Head of caudate nucleus (tissue), 42 donors: ENCODE measurements at regions of chr6 and their contacts with region 1.

Region 1: DNA sequence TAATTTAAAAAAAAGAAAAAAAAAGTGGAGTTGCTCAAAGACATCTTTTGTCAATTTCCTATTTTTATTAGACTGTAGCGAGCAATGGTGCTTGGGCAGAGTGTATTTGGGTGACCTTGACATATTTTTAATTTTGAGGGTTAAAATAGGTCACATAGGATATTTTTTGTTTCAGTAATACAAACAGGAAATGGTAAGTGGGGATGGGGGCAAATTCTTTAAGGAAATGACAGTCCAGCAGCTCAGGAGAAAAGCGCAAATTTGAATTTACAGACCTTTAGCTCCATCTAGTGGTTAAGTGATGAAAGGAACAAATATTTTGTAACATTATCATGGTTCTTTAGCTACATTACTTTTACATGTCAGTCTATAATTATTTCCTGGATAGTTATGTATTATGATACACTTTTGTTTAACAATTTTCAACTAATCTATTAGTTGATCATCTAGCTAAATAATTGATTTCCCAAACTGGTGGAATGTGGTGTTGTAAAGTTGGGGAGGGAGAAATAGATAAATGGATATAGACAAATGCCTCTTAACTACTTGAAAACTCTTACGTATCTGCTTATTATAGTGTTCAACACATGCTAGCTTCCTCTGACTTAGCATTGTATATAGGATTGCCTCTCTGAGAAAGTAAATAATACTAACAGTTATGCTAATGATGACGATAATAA is 10.0 kb downstream of the CITED2 start:
- DNase-seq: peak in 1 of 42 donors; percentile 11

Region 2: DNA sequence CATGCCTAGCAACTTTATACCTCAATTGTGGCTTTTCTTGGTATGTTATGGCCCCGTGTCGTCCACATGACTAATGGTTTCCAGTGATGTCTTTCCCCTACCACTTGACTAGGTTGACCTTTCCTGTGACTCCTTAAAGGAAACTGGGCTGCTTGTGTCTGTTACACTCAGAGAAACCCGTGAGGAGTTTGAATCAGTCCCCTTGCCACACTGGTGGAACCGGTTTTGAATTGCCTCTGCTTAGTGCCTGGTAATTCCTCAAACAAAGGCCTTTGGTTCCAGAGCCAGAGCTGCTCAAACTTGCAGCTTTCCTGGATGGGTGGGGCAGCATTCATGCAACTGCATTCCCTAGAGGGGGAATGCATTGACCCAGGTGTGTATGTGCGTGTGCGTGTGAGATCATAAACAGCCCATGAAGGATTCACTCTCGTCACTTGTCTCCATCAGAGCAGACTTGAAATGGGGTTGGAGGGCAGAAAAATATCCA is 546.6 kb before region 1 on chr6:
- intact Hi-C with region 1: loop called (anchors 5 kb)
- DNase-seq: no peak

Region 3: GRCh38 chr6:139219271-139219729 is 145.1 kb before region 1 on chr6:
- intact Hi-C with region 1: loop called (anchors 5 kb)
- DNase-seq: peak; percentile 39 to 88 (median 76)

Region 4: GRCh38 chr6:139699335-139699734 is 334.9 kb after region 1 on chr6:
- intact Hi-C with region 1: no loop called
- DNase-seq: no peak